Sigmoid colon (tissue), 7 donors: ENCODE measurements at regions of chr9 and their contacts with region 1.

Region 1: GRCh38 chr9:117672397-117672796 is 31.8 kb upstream of the TLR4 start:
- DNase-seq: no peak
- H3K4me3 ChIP-seq: no peak overlapping the region
- H3K27ac ChIP-seq: no peak overlapping the region
- H3K4me1 ChIP-seq: no peaks in the 10 kb centered on the region
- H3K27me3 ChIP-seq: no peaks in the 10 kb centered on the region
- CTCF ChIP-seq: no peak
- EP300 ChIP-seq: no peak
- POLR2A ChIP-seq: no peak

Region 2: DNA sequence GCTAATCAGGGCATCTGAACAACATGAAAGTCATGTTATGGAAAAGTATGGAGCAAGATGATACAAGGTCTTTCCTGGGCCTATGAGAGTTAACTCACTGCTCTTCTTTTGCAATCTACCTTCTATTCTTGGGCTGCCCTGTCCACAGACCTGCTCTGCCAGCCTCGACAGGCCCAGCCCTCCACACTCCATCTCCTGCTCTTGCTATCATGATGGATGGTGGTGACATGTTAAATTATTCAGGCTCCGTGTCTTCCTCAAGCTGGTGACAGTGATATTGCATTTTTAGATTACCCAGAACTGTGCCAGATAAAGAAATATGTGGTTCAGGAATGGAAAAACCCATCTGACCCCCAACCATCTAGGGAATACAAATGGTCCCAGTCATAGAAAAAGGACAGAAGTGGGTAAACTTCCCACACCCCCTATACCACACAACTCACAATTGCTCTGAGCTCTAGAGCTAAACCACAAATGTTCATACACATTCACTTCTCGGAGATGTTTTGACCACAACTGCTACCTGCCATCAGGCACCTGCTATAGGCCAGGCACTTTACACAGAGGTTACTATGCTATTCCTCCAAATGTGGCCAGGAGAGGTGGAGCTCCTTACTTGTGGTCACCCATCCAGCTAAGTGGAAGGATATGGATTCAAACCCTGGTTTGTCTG is 568.8 kb before region 1 on chr9:
- intact Hi-C with region 1: loop called (anchors 10 kb)
- DNase-seq: no peak
- H3K4me3 ChIP-seq: no peak overlapping the region
- H3K27ac ChIP-seq: no peak overlapping the region
- H3K4me1 ChIP-seq: no peaks in the 10 kb centered on the region
- H3K27me3 ChIP-seq: no peaks in the 10 kb centered on the region
- CTCF ChIP-seq: no peak
- EP300 ChIP-seq: no peak
- POLR2A ChIP-seq: no peak

Region 3: GRCh38 chr9:117546894-117547678 is 125.3 kb before region 1 on chr9:
- intact Hi-C with region 1: no loop called
- DNase-seq: no peak
- H3K4me3 ChIP-seq: no peak overlapping the region
- H3K27ac ChIP-seq: no peak overlapping the region
- H3K4me1 ChIP-seq: no peaks in the 10 kb centered on the region
- H3K27me3 ChIP-seq: peaks cover 0 to 3% (median 0%) of the 10 kb centered on the region in 3 donors
- CTCF ChIP-seq: no peak
- EP300 ChIP-seq: no peak
- POLR2A ChIP-seq: no peak

Region 4: DNA sequence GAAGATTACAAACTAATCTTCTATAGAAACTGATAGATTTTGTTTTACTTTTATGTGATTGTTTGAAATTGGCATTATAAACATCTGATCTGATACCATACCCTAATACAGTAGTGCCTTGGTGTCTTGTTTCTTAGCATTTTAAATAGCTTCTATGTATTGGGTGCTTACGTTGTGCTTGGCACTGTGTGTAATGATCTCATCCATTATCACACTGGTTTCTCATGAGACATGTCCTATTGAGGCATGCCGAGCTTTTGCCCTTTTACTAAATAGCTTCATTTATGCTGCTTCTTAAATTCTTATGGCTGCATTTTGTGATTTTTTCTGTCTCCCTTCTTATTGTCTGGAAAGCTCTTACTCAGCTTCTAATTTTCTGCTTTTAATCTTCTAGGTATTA is 16.4 kb before region 1 on chr9:
- intact Hi-C with region 1: no loop called
- DNase-seq: no peak
- H3K4me3 ChIP-seq: no peak overlapping the region
- H3K27ac ChIP-seq: no peak overlapping the region
- H3K4me1 ChIP-seq: no peaks in the 10 kb centered on the region
- H3K27me3 ChIP-seq: no peaks in the 10 kb centered on the region
- CTCF ChIP-seq: no peak
- EP300 ChIP-seq: no peak
- POLR2A ChIP-seq: no peak

Region 5: GRCh38 chr9:118170032-118170955 is 497.9 kb after region 1 on chr9:
- intact Hi-C with region 1: no loop called
- DNase-seq: no peak
- H3K4me3 ChIP-seq: no peak overlapping the region
- H3K27ac ChIP-seq: no peak overlapping the region
- H3K4me1 ChIP-seq: no peaks in the 10 kb centered on the region
- H3K27me3 ChIP-seq: no peaks in the 10 kb centered on the region
- CTCF ChIP-seq: peak in 2 of 4 experiments; percentile 14 to 37
- EP300 ChIP-seq: no peak
- POLR2A ChIP-seq: no peak